Colonic mucosa (tissue), 4 donors: ENCODE measurements at regions of chr1 and their contacts with region 1.

Region 1: GRCh38 chr1:53485478-53486394 is 26.5 kb downstream of the DMRTB1 start:
- DNase-seq: peak; percentile 69
- H3K4me3 ChIP-seq: no peak overlapping the region
- H3K27ac ChIP-seq: no peak overlapping the region
- H3K4me1 ChIP-seq: no peaks in the 10 kb centered on the region
- H3K27me3 ChIP-seq: no peaks in the 10 kb centered on the region
- CTCF ChIP-seq: peak; percentile 75

Region 2: GRCh38 chr1:53086491-53087070 is 399.2 kb before region 1 on chr1:
- intact Hi-C with region 1: no loop called
- DNase-seq: no peak
- H3K4me3 ChIP-seq: no peak overlapping the region
- H3K27ac ChIP-seq: no peak overlapping the region
- H3K4me1 ChIP-seq: no peaks in the 10 kb centered on the region
- H3K27me3 ChIP-seq: no peaks in the 10 kb centered on the region
- CTCF ChIP-seq: no peak

Region 3: DNA sequence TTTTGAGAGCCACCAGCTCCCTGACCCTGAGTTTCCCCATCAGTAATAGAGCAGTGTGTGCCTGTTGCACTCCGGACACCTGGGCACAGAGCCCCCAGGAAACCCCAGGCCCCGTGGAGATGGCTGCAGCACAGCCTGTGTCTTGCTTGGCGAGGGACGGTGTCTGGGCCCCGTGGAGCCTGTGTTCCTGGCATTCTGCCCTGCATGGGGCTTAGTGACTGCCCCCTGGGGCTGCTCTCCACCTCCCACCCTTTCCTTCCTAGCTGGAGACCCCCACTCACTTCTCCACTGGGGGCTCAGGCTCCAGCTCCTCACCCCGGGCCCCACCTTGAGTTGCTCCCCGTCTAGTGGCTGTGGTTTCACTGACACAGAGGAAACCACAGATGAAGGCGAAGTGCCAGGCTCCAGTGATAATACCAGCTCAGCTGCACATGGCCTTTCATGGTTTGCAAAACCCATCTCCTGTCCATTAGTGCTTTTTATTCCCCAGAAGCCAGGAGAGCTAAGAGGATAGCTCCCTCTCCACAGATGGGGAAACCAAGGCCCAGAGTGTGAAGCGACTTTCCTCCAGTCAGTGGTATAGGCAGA is 12.9 kb after region 1 on chr1:
- intact Hi-C with region 1: no loop called
- DNase-seq: no peak
- H3K4me3 ChIP-seq: no peak overlapping the region
- H3K27ac ChIP-seq: no peak overlapping the region
- H3K4me1 ChIP-seq: no peaks in the 10 kb centered on the region
- H3K27me3 ChIP-seq: no peaks in the 10 kb centered on the region
- CTCF ChIP-seq: no peak

Region 4: GRCh38 chr1:53511933-53512806 is 26.4 kb after region 1 on chr1:
- intact Hi-C with region 1: no loop called
- DNase-seq: no peak
- H3K4me3 ChIP-seq: no peak overlapping the region
- H3K27ac ChIP-seq: no peak overlapping the region
- H3K4me1 ChIP-seq: no peaks in the 10 kb centered on the region
- H3K27me3 ChIP-seq: no peaks in the 10 kb centered on the region
- CTCF ChIP-seq: no peak

Region 5: GRCh38 chr1:53592521-53592982 is 106.8 kb after region 1 on chr1:
- intact Hi-C with region 1: loop called (anchors 10 kb)
- DNase-seq: peak; percentile 26
- H3K4me3 ChIP-seq: no peak overlapping the region
- H3K27ac ChIP-seq: no peak overlapping the region
- H3K4me1 ChIP-seq: no peaks in the 10 kb centered on the region
- H3K27me3 ChIP-seq: no peaks in the 10 kb centered on the region
- CTCF ChIP-seq: no peak

Region 6: GRCh38 chr1:53681977-53682685 is 196.4 kb after region 1 on chr1:
- intact Hi-C with region 1: loop called (anchors 5 kb)
- DNase-seq: peak; percentile 81
- H3K4me3 ChIP-seq: no peak overlapping the region
- H3K27ac ChIP-seq: no peak overlapping the region
- H3K4me1 ChIP-seq: peaks cover 6% of the 10 kb centered on the region
- H3K27me3 ChIP-seq: no peaks in the 10 kb centered on the region
- CTCF ChIP-seq: peak; percentile 19

Region 7: DNA sequence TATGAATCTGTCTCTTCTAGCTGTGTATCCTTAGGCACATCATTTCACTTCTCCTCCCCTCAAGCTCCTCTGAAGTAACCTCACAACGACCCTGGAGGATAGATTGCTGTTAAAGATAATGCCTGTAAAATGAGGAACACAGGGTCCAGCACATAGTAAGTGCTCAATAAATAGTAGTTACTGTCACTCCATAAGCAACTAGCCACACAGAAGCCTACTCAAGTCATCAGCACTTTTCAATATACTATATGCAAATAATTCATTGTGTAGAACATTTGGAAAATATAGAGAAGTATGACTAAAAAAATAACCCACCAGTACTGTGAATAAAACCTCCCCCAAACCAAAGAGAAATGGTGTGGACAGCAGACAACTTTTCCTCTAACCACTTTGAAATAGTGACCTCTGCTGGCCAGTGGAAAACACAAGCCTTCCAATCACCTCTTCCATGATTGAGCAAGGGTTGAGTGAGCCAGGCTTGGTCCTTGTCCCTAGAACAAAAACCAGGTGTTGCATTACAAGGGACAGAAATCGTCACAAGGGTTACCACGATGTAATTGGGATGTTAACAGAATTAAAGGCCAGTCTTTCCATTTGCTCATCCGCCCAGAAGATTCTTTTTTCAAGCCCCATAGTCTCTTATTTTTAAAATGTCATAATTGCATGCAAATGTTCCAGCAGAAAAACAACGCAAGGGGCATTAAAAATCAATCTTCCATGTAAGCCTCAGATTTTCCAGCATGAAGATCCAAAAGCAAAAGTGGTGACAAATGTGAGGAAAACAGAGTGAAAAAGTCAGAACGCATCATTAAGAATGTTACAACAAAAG is 269.0 kb after region 1 on chr1:
- intact Hi-C with region 1: loop called (anchors 2 kb)
- DNase-seq: peak; percentile 54
- H3K4me3 ChIP-seq: no peak overlapping the region
- H3K27ac ChIP-seq: no peak overlapping the region
- H3K4me1 ChIP-seq: no peaks in the 10 kb centered on the region
- H3K27me3 ChIP-seq: no peaks in the 10 kb centered on the region
- CTCF ChIP-seq: peak; percentile 61